Common myeloid progenitor, CD34-positive (primary cell): ENCODE measurements at regions of chr11 and their contacts with region 1.

Region 1: DNA sequence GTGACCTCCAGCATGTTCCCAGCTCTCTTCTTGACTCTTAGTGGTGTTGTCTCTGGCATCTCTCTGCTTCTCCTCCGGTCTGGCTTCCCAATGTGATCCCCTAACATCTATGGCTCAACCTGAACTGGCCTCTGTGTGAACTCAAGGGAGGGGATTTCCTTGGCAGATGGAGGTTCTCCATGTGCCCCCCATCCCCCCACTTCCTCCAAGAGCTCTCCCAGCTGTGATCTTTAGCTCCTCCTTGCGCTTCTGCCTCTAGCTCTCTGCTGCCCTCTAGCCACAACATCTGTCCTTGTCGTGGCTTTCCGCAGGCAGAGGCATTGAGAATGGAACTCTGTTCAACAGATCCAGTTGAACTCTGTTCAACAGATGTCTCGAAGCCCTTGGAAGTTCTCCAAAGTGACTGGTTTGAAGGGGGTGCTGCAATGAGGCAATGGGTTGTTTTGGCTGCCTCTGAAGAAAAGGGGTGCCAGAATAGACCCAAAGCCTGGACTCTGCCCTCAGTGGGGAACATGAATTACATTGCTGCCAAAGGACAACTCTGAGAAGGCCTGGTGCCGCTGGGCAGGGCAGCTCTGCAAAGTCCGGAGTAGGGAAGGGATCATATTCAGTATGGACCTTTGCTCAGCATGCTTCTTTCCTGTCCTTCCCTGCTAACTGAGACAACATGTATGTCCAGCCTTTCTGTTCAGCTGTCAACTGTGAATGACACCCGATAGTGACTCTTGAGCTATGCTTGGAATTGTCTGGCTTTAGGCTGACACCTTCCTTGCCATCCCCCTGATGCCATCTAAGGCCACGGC is 61.9 kb downstream of the ADM start:
- DNase-seq: peak; percentile 92 to 99 (median 98)
- H3K4me3 ChIP-seq: peak overlapping the region in 2 of 7 experiments; percentile 37 to 54
- H3K27ac ChIP-seq: no peak overlapping the region
- H3K4me1 ChIP-seq: peaks cover 0 to 9% (median 4%) of the 10 kb centered on the region in 4 experiments
- H3K27me3 ChIP-seq: no peaks in the 10 kb centered on the region

Region 2: DNA sequence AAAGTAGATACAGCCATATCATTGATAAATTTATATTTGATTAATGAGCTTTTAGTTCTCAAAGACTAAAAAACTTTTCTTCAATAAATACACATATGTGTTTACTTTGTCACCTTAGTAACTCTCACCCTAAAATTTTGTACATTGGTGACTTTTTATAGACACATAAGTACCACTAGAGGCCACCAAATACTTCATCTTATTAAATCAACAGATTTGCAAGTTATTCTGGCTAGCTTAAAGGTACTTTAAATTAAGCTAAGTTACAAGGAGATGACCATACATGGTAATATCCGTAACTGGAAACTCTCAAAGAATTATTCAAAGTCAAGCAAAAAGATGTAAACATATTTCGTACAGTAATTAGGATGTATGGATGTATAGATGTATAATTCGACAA is 185.0 kb before region 1 on chr11:
- CTCF ChIA-PET with region 1: interaction called, 10 read pairs
- POLR2A ChIA-PET with region 1: no interaction called
- DNase-seq: peak; percentile 60 to 85 (median 78)
- H3K4me3 ChIP-seq: no peak overlapping the region
- H3K27ac ChIP-seq: peak overlapping the region in 1 of 2 experiments; percentile 75
- H3K4me1 ChIP-seq: peaks cover 0 to 5% (median 0%) of the 10 kb centered on the region in 4 experiments
- H3K27me3 ChIP-seq: no peaks in the 10 kb centered on the region

Region 3: GRCh38 chr11:10322830-10323792 is 43.7 kb before region 1 on chr11:
- CTCF ChIA-PET with region 1: interaction called, 47 read pairs
- POLR2A ChIA-PET with region 1: interaction called, 3 read pairs
- DNase-seq: peak; percentile 78 to 88 (median 87)
- H3K4me3 ChIP-seq: peak overlapping the region in 1 of 7 experiments; percentile 63
- H3K27ac ChIP-seq: no peak overlapping the region
- H3K4me1 ChIP-seq: peaks cover 0 to 16% (median 5%) of the 10 kb centered on the region in 4 experiments
- H3K27me3 ChIP-seq: no peaks in the 10 kb centered on the region

Region 4: DNA sequence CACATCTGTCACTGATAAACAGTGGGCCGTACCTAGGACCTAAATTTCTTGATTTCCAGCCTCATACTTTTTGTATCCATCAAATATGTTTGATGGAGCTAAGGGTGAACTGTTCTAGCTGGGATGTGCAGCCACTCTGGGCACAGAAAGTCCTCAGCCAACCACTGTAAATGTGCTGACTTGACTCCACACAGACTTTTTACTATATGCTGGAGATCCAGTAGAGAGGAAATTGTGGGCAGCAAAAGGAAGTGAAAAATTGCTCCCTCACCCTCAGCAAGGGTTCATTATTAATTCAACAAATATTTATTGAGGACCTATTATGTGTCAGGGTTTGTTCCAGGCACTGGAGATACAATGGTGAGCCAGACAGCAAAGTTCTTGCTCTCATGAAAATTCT is 34.1 kb after region 1 on chr11:
- CTCF ChIA-PET with region 1: interaction called, 14 read pairs
- POLR2A ChIA-PET with region 1: no interaction called
- DNase-seq: peak in 2 of 3 donors; percentile 54 to 60
- H3K4me3 ChIP-seq: no peak overlapping the region
- H3K27ac ChIP-seq: no peak overlapping the region
- H3K4me1 ChIP-seq: peaks cover 4 to 34% (median 29%) of the 10 kb centered on the region in 4 experiments
- H3K27me3 ChIP-seq: no peaks in the 10 kb centered on the region

Region 5: DNA sequence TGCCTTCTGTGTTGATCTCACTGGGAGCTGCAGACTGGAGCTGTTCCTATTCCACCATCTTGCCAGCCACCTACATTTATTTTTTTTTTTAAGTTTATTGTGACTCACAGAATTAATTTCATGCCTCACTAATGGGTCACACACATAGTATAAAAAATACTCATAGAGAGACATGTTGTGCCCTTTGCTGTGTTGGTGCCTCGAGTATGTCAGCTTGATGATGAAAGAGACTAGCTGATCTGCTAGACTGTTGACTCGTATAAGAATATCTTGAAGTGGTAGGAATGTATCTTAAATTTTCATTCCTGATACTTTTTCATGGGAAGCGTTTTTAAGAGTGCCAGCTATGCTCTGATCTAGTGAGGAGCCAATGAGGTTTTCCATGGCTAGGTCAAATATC is 59.7 kb after region 1 on chr11:
- CTCF ChIA-PET with region 1: no interaction called
- POLR2A ChIA-PET with region 1: no interaction called
- DNase-seq: no peak
- H3K4me3 ChIP-seq: no peak overlapping the region
- H3K27ac ChIP-seq: no peak overlapping the region
- H3K4me1 ChIP-seq: no peaks in the 10 kb centered on the region
- H3K27me3 ChIP-seq: no peaks in the 10 kb centered on the region